ENCODE measurements at regions of chr12 and their contacts with region 1.

Region 1: GRCh38 chr12:39272871-39273770 is 169.8 kb downstream of the KIF21A start:
- DNase-seq: no peak
- H3K4me3 ChIP-seq: no peak overlapping the region
- H3K27me3 ChIP-seq: no peaks in the 10 kb centered on the region
- CTCF ChIP-seq: peak; percentile 73

Region 2: DNA sequence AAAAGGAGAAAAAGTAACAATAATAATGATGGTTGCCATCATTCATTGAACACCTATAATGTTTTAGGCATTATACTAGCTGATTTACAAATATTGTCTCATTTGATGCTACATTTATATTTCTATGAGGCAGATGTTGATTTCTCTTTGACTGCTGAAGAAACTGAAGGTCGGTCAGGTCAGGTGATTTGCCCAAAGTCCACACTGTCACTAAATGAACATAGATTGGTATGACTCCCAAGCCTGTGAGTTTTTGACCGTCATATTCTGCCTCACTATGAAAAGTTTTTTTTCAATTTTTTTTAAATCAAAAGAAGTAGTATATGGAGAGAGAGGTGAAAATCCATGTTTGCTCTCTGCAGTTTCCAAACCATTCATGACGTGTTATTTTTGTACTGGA is 945.8 kb before region 1 on chr12:
- CTCF ChIA-PET with region 1: interaction called, 10 read pairs
- POLR2A ChIA-PET with region 1: no interaction called
- DNase-seq: no peak
- H3K4me3 ChIP-seq: no peak overlapping the region
- H3K27me3 ChIP-seq: no peaks in the 10 kb centered on the region
- CTCF ChIP-seq: no peak

Region 3: GRCh38 chr12:39145175-39145999 is 127.7 kb before region 1 on chr12:
- CTCF ChIA-PET with region 1: no interaction called
- POLR2A ChIA-PET with region 1: no interaction called
- DNase-seq: no peak
- H3K4me3 ChIP-seq: no peak overlapping the region
- H3K27me3 ChIP-seq: no peaks in the 10 kb centered on the region
- CTCF ChIP-seq: peak; percentile 8; the same call in 1 of the 2 replicates

Region 4: GRCh38 chr12:39287817-39288216 is 14.7 kb after region 1 on chr12:
- CTCF ChIA-PET with region 1: interaction called, 14 read pairs
- POLR2A ChIA-PET with region 1: no interaction called
- DNase-seq: no peak
- H3K4me3 ChIP-seq: no peak overlapping the region
- H3K27me3 ChIP-seq: no peaks in the 10 kb centered on the region
- CTCF ChIP-seq: no peak